ENCODE measurements at regions of chr11 and their contacts with region 1.

Region 1: DNA sequence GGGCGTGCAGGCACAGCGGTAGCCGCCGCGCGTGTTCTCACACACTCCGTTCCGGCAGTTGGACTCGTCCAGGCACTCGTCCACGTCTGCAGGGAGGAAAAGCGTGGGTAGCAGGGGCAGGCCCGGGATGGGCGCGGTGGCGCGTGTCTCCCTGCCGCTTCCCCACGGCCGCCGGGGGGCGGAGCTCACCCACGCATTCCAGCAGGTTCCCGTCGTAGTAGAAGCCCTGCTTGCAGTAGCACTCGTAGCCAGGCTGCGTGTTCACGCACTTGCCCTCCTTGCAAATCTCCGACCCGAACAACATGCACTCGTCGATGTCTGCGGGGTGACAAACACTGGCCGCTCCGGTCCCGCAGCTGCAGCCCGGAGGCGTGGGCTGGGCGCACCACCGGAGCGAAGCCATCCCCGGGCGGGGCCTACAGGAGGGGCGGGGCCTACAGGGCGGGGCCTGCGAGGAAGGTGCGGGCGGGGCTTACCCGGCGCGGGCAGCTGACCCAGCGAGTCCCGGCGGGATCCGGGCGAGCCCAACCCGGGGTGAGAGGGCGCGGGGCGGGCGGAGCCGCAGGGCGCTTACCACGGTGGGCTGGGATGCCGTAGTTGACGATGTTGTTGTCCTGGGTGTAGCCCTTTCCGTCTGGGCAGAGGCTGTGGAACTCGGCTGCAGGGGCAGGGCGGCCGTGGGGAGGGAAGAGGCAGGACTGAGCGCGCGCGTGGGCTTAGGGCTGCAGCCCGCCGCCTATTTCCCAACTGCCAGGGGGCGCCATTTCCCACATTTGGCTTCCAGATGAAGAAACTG is 15.6 kb downstream of the SCYL1 start:
- DNase-seq: peak; percentile 99
- H3K4me3 ChIP-seq: peak overlapping the region; percentile 63 to 98 (median 82)
- H3K27ac ChIP-seq: peak overlapping the region; percentile 79 to 96 (median 90)
- H3K4me1 ChIP-seq: peaks cover 7 to 59% (median 42%) of the 10 kb centered on the region in 6 donors
- H3K27me3 ChIP-seq: no peaks in the 10 kb centered on the region
- CTCF ChIP-seq: peak; percentile 82 to 96 (median 90)
- POLR2A ChIP-seq: no peak

Region 2: DNA sequence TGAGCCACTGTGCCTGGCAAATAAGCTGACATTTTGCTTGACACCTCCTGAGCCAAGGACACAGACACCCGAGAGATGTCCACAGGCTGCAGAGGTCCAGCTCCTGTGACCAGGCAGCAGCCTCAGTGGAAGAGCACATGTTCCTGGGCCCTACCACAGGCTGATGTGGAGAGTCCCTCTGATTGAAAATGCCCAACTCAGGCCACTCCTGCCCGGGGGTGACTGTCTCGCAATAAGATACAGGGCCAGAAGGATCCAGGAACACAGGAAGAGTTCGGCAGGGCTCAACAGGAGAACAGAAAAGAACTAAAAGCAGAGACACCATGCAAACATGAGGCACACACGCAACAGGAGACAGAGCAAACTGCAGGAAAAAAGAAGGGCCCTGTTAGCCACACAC is 70.1 kb before region 1 on chr11:
- intact Hi-C with region 1: no loop called
- DNase-seq: no peak
- H3K4me3 ChIP-seq: no peak overlapping the region
- H3K27ac ChIP-seq: peak overlapping the region in 5 of 8 donors; percentile 87 to 95 (median 92)
- H3K4me1 ChIP-seq: peaks cover 11 to 47% (median 28%) of the 10 kb centered on the region in 6 donors
- H3K27me3 ChIP-seq: no peaks in the 10 kb centered on the region
- CTCF ChIP-seq: no peak
- POLR2A ChIP-seq: no peak

Region 3: GRCh38 chr11:65588199-65589054 is 47.9 kb after region 1 on chr11:
- intact Hi-C with region 1: loop called (anchors 5 kb)
- DNase-seq: peak; percentile 92
- H3K4me3 ChIP-seq: peak overlapping the region in 3 of 8 donors; percentile 3 to 35 (median 14)
- H3K27ac ChIP-seq: peak overlapping the region; percentile 65 to 92 (median 82)
- H3K4me1 ChIP-seq: peaks cover 50 to 96% (median 74%) of the 10 kb centered on the region in 6 donors
- H3K27me3 ChIP-seq: no peaks in the 10 kb centered on the region
- CTCF ChIP-seq: peak; percentile 73 to 89 (median 83)
- POLR2A ChIP-seq: no peak

Measured in spleen (tissue), 13 donors.